GM13976 (cell line): ENCODE measurements at regions of chr7 and their contacts with region 1.

Region 1: GRCh38 chr7:129218514-129219062 is 6.2 kb upstream of the AHCYL2 start:
- DNase-seq: peak; percentile 83
- CTCF ChIP-seq: peak; percentile 86

Region 2: GRCh38 chr7:128904381-128905197 is 314.0 kb before region 1 on chr7:
- in situ Hi-C with region 1: loop called (anchors 10 kb)
- DNase-seq: peak; percentile 91
- CTCF ChIP-seq: peak; percentile 37

Region 3: DNA sequence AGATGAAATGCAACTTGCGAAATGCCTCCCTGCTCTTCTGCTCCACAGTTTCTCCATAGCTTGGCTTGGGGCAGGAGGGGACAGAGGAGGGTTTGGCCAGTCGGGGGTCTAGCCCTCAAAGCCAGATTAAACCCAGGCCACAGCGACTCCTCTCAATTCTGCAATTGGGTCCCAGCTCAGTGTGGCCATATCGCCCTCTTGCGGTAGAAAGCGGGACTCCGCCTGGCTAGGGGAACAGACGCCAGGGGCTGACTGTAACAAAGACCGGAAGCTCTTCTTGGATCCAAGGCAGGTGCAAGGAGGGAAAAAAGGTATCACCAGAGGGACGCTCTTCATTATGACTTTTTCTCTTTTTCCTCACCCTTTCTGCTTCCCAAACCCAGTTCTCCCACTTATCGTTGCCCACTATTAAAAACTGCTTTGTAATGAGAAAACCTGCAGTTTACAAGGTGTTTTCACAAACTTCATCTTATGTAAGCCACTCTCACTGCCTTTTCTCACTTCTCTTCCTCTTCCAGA is 127.0 kb before region 1 on chr7:
- in situ Hi-C with region 1: no loop called
- DNase-seq: peak; percentile 81
- CTCF ChIP-seq: peak; percentile 99

Region 4: DNA sequence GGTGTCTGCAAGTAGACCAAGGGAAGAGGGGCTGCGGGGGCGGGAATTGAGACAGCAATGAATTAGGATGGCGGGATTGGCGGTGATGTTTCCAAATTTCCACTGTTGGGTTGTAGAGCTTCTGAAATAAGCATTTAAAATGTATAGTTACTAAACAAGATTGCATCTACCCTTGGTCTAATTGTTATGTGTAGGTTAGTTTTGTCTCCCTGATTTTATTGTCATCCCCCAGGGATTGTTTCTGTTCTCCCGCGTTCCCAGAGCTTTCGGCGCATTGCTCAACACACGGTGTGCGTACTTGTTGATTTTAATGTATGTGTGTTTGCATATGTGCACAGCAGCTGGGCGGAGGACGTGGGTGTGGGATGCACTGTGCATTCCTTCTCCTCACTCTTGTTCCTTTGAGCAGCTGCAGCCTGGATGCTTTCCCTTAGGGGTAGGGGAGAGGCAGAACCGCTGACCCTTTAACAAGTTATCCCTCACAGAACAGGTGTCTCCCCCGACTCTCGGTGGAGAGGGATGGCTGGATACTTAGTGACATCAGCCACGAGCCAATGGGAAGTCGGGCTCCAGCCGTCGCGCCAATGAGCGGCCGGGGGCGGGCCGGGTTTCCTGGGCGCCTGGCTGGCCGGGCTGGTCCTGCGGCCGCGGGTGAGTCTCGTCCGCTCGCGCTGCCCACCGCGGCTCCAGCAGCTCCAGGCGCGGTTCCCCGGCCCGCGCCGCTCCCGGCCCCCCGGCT is 74.3 kb before region 1 on chr7 and contains the start of gene TSPAN33:
- in situ Hi-C with region 1: no loop called
- DNase-seq: peak; percentile 91
- CTCF ChIP-seq: no peak

Region 5: DNA sequence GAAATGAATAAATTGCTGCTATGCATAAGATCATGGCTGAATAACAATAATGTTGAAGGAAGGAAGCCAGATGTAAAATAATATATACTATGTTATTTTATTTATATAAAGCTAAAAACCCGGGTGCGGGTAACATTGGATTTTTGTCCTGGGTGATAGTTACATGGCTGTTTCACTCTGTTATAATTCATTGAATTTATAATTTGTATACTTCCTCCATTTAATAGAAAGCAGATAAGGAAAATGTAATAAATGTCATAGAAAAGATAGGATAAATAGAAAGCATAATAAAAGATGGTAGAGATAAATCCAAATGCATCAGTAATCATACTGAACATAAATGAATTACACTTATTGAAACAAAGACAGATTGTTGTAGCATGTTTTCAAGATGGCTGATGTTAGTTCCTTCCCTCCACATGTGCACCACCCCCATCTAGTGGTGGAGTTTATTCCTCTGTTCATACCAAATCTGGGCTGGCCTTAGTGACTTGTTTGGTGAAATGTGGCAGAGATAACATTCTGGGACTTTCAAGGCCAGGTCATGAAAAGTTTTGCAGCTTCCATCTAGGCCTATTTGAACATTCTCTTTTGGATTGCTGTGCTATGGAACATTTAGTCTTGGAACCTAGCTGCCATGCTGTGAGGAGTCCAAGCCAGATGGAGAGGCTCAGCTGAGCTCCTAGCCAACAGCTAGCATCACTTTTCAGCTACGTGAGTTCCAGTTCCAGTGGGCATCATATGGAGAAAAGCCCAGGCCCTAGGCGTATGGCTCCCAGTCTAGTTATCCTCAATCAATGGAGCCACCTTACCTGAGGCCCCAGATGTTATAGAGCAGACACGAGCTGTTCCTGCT is 53.1 kb after region 1 on chr7:
- in situ Hi-C with region 1: no loop called
- DNase-seq: peak; percentile 61
- CTCF ChIP-seq: peak; percentile 50

Region 6: GRCh38 chr7:129298268-129298893 is 79.8 kb after region 1 on chr7:
- in situ Hi-C with region 1: loop called (anchors 10 kb)
- DNase-seq: peak; percentile 65
- CTCF ChIP-seq: peak; percentile 61